AG04449 (cell line): ENCODE measurements at regions of chr1 and their contacts with region 1.

Region 1: GRCh38 chr1:172955161-172955815 is 95.5 kb downstream of the TNFSF18 start:
- DNase-seq: peak; percentile 87
- H3K4me3 ChIP-seq: no peak overlapping the region
- CTCF ChIP-seq: no peak

Region 2: GRCh38 chr1:172826096-172826743 is 129.1 kb before region 1 on chr1:
- CTCF ChIA-PET with region 1: interaction called, 13 read pairs
- POLR2A ChIA-PET with region 1: interaction called, 4 read pairs
- DNase-seq: peak; percentile 71
- H3K4me3 ChIP-seq: no peak overlapping the region
- CTCF ChIP-seq: peak; percentile 58

Region 3: DNA sequence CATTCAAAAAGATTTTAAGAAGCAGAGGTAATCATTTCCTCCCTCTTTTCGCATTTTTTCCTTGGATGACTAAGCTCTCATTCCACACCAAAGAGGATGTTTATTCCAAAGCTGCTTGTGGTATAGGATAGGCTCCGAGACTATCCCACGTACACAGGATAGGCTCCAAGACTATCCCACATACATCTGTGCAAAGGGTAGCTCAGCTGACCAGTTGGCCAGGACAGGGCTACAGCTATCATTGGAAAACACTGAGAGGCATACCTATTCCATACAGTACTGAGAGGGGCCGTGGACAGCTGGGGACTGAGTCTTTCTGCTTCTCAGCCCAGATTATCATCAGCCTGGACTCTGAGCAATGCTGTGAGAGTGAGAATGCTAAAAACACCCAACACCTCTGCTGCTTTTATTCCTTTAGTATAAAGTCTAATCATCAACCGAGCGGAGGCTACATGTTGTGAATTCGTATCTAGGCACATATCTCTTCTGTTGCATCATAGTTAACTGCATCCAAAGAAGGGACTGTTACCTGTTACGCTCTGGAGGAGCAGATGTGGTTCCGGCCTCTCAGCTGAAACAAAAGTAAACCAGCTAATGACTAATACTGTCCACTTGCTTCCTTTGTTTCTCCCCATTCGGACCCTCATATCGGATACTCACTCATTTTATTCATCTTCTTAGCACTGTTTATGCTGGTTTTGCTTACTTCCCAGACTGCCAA is 45.5 kb before region 1 on chr1:
- CTCF ChIA-PET with region 1: no interaction called
- POLR2A ChIA-PET with region 1: interaction called, 13 read pairs
- DNase-seq: peak; percentile 97
- H3K4me3 ChIP-seq: no peak overlapping the region
- CTCF ChIP-seq: no peak

Region 4: GRCh38 chr1:173020138-173020750 is 65.0 kb after region 1 on chr1:
- CTCF ChIA-PET with region 1: no interaction called
- POLR2A ChIA-PET with region 1: no interaction called
- DNase-seq: no peak
- H3K4me3 ChIP-seq: no peak overlapping the region
- CTCF ChIP-seq: no peak